ENCODE measurements at regions of chr11 and their contacts with region 1.

Region 1: GRCh38 chr11:47565340-47566148 is at the start of gene PTPMT1:
- DNase-seq: peak; percentile 92 to 93
- H3K4me3 ChIP-seq: peak within 1 kb of the TSS; percentile 97
- H3K4me3 Mint-ChIP-seq: peak within 1 kb of the TSS; percentile 77
- H3K27ac Mint-ChIP-seq: peak within 1 kb of the TSS; percentile 82
- H3K4me1 ChIP-seq: no peaks in the 10 kb centered on the region; the same call in 1 of the 2 replicates
- H3K4me1 Mint-ChIP-seq: no peaks in the 10 kb centered on the region
- H3K27me3 ChIP-seq: no peaks in the 10 kb centered on the region
- H3K27me3 Mint-ChIP-seq: no peaks in the 10 kb centered on the region
- CTCF ChIP-seq: no peak
- total RNA-seq, gene PTPMT1: 100 and 108 TPM in 2 replicates

Region 2: GRCh38 chr11:47578524-47579460 is 13.2 kb after region 1 on chr11 and contains the starts of genes KBTBD4 and NDUFS3:
- CTCF ChIA-PET with region 1: interaction called, 3 read pairs
- POLR2A ChIA-PET with region 1: interaction called, 12 read pairs
- intact Hi-C with region 1: no loop called
- DNase-seq: peak; percentile 93 to 94
- H3K4me3 ChIP-seq: peak within 1 kb of the TSS; percentile 95
- H3K4me3 Mint-ChIP-seq: peak within 1 kb of the TSS; percentile 91
- H3K27ac Mint-ChIP-seq: peak within 1 kb of the TSS; percentile 95
- H3K4me1 ChIP-seq: peaks cover 5% of the 10 kb centered on the region; the same call in 1 of the 2 replicates
- H3K4me1 Mint-ChIP-seq: peaks cover 6% of the 10 kb centered on the region
- H3K27me3 ChIP-seq: no peaks in the 10 kb centered on the region
- H3K27me3 Mint-ChIP-seq: no peaks in the 10 kb centered on the region
- CTCF ChIP-seq: no peak
- total RNA-seq, gene KBTBD4: 11.9 and 12.5 TPM in 2 replicates
- total RNA-seq, gene NDUFS3: 183 and 185 TPM in 2 replicates

Region 3: GRCh38 chr11:48001438-48002021 is 436.0 kb after region 1 on chr11:
- CTCF ChIA-PET with region 1: interaction called, 11 read pairs
- POLR2A ChIA-PET with region 1: no interaction called
- intact Hi-C with region 1: no loop called
- DNase-seq: no peak
- H3K4me3 ChIP-seq: no peak overlapping the region
- H3K4me3 Mint-ChIP-seq: no peak overlapping the region
- H3K27ac Mint-ChIP-seq: no peak overlapping the region
- H3K4me1 ChIP-seq: peaks cover 35% of the 10 kb centered on the region
- H3K4me1 Mint-ChIP-seq: peaks cover 35% of the 10 kb centered on the region
- H3K27me3 ChIP-seq: no peaks in the 10 kb centered on the region
- H3K27me3 Mint-ChIP-seq: no peaks in the 10 kb centered on the region
- CTCF ChIP-seq: no peak